Mammary epithelial cell (primary cell): ENCODE measurements at regions of chr2 and their contacts with region 1.

Region 1: GRCh38 chr2:158024288-158024898 is 77.3 kb upstream of the UPP2 start:
- DNase-seq: peak; percentile 27
- H3K4me3 ChIP-seq: no peak overlapping the region
- H3K27ac ChIP-seq: no peak overlapping the region
- H3K4me1 ChIP-seq: peaks cover 7% of the 10 kb centered on the region
- H3K27me3 ChIP-seq: no peaks in the 10 kb centered on the region
- CTCF ChIP-seq: peak; percentile 79 to 96

Region 2: DNA sequence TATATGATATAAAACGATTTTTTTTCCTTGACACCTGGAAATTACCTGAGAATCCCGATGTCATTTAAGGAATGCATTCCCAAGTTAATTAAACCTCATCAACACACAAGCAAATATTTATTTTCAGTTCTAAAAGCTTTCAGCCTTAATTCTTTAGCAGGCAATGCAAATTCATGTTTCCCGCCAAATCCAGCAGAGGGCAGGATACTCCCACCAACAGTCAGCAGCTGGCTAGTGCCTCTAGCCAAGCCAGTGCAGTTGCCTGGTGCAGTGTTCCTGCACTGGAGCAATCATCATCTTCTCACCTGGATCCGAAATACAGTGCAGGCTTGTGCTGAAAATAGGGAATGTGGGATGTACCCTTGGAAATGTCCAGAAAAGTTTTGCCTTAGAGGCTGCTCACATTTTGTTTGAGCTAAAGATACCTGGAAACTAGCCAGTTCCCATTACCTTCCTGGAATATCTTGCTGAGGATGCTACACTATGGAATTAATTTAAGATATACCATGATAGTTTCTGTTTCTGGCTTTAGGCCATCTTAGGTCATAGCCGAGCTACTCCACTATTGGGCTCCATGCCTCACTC is 532.1 kb before region 1 on chr2:
- CTCF ChIA-PET with region 1: no interaction called
- dilution Hi-C with region 1: no loop called
- in situ Hi-C with region 1: loop called in 1 of 2 experiments (anchors 25 kb)
- intact Hi-C with region 1: no loop called
- DNase-seq: peak; percentile 48
- H3K4me3 ChIP-seq: no peak overlapping the region
- H3K27ac ChIP-seq: no peak overlapping the region
- H3K4me1 ChIP-seq: no peaks in the 10 kb centered on the region
- H3K27me3 ChIP-seq: no peaks in the 10 kb centered on the region
- CTCF ChIP-seq: peak; percentile 78 to 82

Region 3: GRCh38 chr2:157777427-157777826 is 247.0 kb before region 1 on chr2:
- CTCF ChIA-PET with region 1: no interaction called
- dilution Hi-C with region 1: loop called (anchors 25 kb)
- in situ Hi-C with region 1: no loop called
- intact Hi-C with region 1: no loop called
- DNase-seq: peak; percentile 28
- H3K4me3 ChIP-seq: no peak overlapping the region
- H3K27ac ChIP-seq: no peak overlapping the region
- H3K4me1 ChIP-seq: no peaks in the 10 kb centered on the region
- H3K27me3 ChIP-seq: no peaks in the 10 kb centered on the region
- CTCF ChIP-seq: peak; percentile 60 to 66

Region 4: GRCh38 chr2:158060862-158061435 is 36.6 kb after region 1 on chr2:
- CTCF ChIA-PET with region 1: no interaction called
- dilution Hi-C with region 1: no loop called
- in situ Hi-C with region 1: no loop called
- intact Hi-C with region 1: no loop called
- DNase-seq: no peak
- H3K4me3 ChIP-seq: no peak overlapping the region
- H3K27ac ChIP-seq: no peak overlapping the region
- H3K4me1 ChIP-seq: no peaks in the 10 kb centered on the region
- H3K27me3 ChIP-seq: peaks cover 3% of the 10 kb centered on the region
- CTCF ChIP-seq: no peak

Region 5: DNA sequence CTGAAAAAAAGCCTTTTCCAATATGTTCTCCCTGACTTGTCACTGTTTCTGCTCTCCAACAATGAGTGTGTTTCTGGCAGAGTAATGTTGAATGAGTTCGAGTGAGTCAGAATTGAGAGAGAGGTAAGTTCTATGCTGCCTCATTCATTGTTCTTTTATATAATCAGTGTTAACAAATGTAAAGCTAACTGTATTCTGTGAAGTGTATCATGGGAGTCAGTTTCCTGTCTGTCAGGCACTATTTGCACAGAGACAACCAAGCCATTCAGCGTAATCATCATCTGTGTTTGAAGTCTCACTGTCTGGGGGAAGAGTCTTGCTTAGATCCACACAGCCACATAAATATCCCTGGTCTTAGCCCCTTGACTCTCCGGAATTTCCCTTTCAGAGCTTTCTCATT is 55.3 kb after region 1 on chr2:
- CTCF ChIA-PET with region 1: no interaction called
- dilution Hi-C with region 1: no loop called
- in situ Hi-C with region 1: no loop called
- intact Hi-C with region 1: no loop called
- DNase-seq: peak; percentile 28
- H3K4me3 ChIP-seq: no peak overlapping the region
- H3K27ac ChIP-seq: no peak overlapping the region
- H3K4me1 ChIP-seq: no peaks in the 10 kb centered on the region
- H3K27me3 ChIP-seq: peaks cover 4% of the 10 kb centered on the region
- CTCF ChIP-seq: no peak

Region 6: GRCh38 chr2:158817588-158817987 is 793.2 kb after region 1 on chr2:
- CTCF ChIA-PET with region 1: no interaction called
- dilution Hi-C with region 1: no loop called
- in situ Hi-C with region 1: no loop called
- intact Hi-C with region 1: no loop called
- DNase-seq: no peak
- H3K4me3 ChIP-seq: no peak overlapping the region
- H3K27ac ChIP-seq: no peak overlapping the region
- H3K4me1 ChIP-seq: peaks cover 14% of the 10 kb centered on the region
- H3K27me3 ChIP-seq: no peaks in the 10 kb centered on the region
- CTCF ChIP-seq: no peak